ENCODE measurements at regions of chr11 and their contacts with region 1.

Region 1: DNA sequence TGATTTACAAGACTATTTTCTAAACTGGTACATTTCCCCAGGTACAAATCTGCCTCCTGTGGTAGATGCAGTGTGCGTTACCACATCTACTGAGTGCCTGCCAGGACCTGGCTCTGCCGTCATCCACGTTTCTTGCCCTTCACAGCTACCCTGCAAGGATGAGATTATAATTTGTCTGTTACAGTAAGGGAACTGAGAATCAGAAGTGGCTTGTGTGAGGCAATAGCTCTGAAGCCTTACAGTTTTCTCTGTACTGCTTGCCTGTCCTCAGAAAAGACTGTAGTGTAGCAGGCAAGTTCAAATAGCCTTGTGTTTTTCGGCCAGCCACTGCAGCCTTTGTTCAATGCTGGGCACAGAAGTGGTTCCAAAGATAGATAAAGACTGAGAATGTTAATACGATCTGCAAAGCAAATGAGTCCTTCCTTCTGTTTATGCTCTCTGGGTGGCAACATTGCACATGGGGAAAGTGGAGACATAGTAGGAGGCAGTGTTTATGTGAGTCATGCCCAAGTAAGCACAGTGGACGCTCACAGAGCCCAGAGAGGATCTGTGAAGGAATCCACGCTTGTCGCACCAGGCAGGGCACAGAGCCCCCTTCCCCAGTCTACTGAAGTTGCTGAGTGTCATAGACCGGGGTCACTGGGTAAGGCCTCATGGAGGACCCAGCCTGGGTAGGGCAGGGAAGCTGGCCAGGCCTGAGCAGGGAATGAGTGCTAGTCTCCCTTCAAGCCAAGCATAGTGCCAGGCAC is 49.1 kb downstream of the MICAL2 start:
- DNase-seq: no peak

Region 2: DNA sequence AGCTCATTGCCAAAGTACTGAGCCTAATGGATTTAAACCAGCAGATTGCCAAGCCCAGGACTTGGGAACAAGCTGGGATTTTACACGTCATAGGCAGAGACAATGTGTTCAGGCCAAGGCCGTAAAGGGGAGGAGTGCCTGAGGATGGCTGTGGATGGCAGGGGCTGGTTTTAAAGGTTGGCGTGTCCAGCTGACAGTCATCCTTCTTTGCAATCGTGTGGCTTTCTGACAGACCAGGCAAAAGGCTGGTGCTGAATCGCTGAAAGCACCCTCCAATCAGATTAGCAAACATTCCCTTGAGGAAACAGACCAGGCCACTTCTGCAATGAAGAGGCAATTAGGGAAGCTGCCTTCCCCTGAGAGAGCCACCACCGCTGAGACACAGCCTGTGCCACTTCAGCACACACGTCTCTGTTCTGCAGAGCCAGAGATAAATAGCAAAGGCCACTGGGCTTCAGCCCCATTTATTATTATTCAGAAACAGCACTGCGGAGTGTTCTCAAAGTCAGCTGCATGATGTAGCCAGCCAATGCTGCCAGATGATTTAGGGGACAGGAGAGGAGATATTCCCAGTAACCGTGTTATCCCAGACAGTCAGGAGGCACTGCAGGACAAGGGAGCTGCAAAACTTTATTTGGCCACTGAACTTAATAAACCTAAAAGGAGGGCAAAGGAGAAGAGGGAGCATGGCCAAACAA is 752.3 kb before region 1 on chr11:
- intact Hi-C with region 1: no loop called
- DNase-seq: no peak

Region 3: DNA sequence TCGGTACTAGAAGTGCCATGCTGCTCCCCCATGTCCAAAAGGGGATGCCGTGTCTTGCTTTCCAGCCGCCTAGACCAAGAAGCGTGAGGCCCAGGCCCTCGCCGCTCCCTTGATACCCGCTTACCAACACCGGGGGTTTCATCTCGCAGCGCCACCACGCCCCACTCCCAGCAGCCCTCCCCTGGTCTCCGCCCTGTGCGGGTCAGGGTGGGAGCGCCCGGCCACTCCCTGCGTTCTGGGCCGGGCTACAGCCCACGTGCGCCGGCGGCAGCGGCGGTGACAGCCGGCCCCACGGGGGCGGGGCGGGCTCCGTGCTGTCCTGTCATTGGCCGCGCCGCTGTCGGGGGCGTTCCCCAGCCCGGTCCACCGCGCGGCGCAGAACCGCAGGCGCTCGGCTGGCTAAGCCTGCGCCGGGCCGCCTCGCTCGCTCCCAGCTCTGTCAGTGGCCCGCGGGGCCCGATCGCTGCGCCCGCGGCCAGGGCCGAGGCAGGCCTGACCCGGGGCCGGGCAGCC is 49.3 kb before region 1 on chr11 and contains the start of gene MICAL2:
- intact Hi-C with region 1: loop called in 1 of 2 experiments (anchors 10 kb)
- DNase-seq: peak; percentile 97
- total RNA-seq, gene MICAL2: 151 to 231 TPM

Region 4: GRCh38 chr11:12224537-12224893 is 65.0 kb after region 1 on chr11:
- intact Hi-C with region 1: loop called in 1 of 2 experiments (anchors 5 kb)
- DNase-seq: peak; percentile 96

Region 5: DNA sequence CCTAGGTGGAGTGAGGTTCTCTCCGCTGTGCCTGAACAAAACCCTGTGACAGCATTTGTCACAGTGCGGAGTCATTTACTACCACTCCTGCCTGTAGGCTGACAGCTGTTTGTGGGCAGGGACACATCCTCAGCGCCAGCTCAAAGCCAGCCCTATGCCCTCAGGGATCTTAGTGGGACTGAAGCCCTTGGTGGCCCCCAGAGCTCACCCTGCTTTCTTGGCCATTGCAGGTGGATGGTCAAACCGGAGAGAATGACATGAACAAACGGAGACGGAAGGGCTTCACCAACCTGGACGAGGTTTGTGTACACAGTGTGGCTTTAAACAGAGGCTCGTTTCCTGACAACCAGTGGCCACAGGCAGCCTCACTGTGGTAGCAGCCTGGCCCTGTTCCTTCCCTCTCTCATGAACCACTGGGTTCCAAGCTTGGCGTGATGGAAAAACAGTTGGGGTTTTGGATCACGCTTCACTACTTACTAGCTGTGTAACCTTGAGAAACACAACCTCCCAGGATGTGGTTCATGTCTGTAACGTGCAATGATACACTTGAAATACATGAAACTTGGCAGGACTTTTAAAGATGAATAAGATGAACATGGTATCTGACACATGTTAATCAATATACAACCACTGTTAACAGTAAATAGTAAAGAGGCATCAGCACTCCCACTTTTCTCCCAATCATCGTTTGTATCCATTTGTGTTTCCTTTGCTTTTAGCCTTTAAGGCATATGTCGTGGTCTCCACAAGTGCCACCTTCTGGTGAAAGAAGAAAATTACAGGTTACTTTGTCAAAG is 76.6 kb after region 1 on chr11:
- intact Hi-C with region 1: loop called in 1 of 2 experiments (anchors 5 kb)
- DNase-seq: no peak